ENCODE measurements at regions of chr10 and their contacts with region 1.

Region 1: DNA sequence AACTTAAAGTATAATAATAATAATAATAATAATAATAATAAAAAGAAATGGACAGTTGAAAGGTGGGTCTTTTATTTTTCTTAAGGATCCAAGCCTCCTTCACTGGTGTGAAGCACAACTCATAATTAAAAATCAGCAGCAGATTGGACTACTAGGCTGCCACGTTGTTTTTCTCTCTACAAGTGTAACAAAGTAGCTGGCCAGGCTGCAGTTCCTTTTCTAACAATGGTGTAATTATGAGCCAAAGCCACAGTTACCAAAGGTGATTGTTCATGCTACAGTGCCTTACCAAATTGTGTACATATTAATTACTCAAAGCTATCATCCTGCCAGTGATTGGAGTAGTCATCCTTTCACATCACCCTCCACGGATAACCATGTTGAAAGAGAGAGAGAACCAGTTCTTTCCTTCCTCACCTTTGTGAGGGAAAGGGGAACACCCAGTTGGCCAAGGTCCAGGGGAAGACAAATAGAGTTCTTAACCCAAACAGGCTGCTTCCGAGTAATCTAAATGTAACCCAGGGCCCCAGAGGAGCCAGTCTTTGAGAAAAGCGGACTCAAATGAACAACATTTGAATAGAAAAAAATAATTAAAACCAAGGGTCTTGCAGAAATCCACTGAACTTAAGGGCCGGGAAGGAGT is 86.3 kb upstream of the NPS start:
- DNase-seq: peak; percentile 1
- H3K4me3 ChIP-seq: no peak overlapping the region
- H3K27ac ChIP-seq: no peak overlapping the region
- H3K4me1 ChIP-seq: no peaks in the 10 kb centered on the region
- H3K27me3 ChIP-seq: no peaks in the 10 kb centered on the region
- CTCF ChIP-seq: no peak

Region 2: DNA sequence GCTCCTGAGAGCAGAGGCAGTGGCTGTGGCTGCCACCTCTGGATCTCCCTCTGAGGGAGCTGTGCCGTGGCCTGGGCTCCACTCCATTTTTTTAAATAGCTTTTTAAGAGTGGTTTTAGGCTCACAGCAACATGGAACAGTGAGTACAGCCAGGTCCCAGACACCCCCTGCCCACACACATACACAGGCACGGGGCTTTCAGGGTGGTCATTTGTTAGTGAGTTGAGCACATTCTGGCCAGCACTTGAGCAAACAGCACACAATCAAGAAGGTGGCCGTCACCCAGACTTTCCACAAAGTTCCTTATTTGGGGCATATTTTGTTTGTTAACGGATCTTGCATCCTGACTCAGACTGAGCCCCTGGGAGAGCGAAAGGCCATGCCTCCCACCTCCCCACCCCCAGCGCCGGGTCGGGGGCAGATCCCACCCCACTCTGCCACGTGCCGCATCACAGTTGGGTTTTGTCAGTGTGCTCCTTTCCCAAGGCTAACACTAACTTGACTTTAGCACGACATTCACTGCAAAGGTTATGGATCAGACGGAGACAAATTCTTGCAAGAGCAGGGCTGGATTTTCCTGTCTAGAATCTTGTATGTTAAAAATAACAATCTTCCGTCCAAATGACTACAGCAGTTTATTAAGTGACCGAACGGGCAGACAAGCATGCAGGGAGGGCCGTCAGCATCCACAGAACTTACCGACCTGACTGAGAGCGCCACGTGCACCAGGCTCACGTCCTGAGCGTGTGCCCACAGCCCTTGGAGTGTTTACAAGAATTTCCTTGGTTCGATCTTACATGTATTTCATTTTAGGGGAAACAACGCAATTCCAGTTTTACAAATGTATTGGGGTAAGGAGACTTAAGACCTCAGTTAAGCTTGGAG is 70.2 kb before region 1 on chr10:
- CTCF ChIA-PET with region 1: no interaction called
- dilution Hi-C with region 1: loop called (anchors 5 kb)
- in situ Hi-C with region 1: no loop called
- intact Hi-C with region 1: no loop called
- DNase-seq: no peak
- H3K4me3 ChIP-seq: no peak overlapping the region
- H3K27ac ChIP-seq: no peak overlapping the region
- H3K4me1 ChIP-seq: no peaks in the 10 kb centered on the region
- H3K27me3 ChIP-seq: no peaks in the 10 kb centered on the region
- CTCF ChIP-seq: no peak